ENCODE measurements at regions of chr16 and their contacts with region 1.

Region 1: GRCh38 chr16:75519881-75520280 is 16.0 kb downstream of the CHST5 start:
- DNase-seq: no peak
- H3K4me3 Mint-ChIP-seq: no peak overlapping the region
- H3K27ac Mint-ChIP-seq: no peak overlapping the region
- H3K4me1 Mint-ChIP-seq: peaks cover 10% of the 10 kb centered on the region
- H3K27me3 Mint-ChIP-seq: no peaks in the 10 kb centered on the region

Region 2: GRCh38 chr16:75471723-75472633 is 47.9 kb before region 1 on chr16:
- CTCF ChIA-PET with region 1: interaction called, 36 read pairs
- POLR2A ChIA-PET with region 1: no interaction called
- intact Hi-C with region 1: no loop called
- DNase-seq: peak; percentile 54
- H3K4me3 Mint-ChIP-seq: no peak overlapping the region
- H3K27ac Mint-ChIP-seq: no peak overlapping the region
- H3K4me1 Mint-ChIP-seq: no peaks in the 10 kb centered on the region
- H3K27me3 Mint-ChIP-seq: no peaks in the 10 kb centered on the region

Region 3: DNA sequence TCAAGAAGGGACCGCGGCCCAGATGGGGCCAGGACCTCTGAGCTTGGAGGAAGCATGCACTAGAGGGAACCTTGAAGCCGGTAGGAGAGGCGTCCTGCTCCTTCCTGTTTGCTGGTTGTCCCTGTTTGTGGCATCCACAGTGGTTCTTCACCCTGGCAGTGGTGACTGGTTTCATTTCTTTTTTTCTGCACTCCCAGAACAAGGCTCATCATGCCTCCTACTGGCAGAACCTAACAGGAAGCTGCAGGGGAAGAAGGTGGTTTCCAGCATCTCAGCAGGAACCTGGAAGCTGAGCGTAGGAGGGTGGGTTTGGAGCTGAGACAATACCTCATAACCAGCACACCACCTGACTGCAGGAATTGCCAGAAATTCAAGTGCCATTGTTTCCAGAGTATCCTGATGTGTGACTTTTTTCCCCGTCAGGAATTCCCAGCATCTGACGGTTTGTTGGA is 30.4 kb after region 1 on chr16:
- CTCF ChIA-PET with region 1: interaction called, 21 read pairs
- POLR2A ChIA-PET with region 1: interaction called, 8 read pairs
- intact Hi-C with region 1: no loop called
- DNase-seq: peak; percentile 64
- H3K4me3 Mint-ChIP-seq: no peak overlapping the region
- H3K27ac Mint-ChIP-seq: no peak overlapping the region
- H3K4me1 Mint-ChIP-seq: peaks cover 2% of the 10 kb centered on the region
- H3K27me3 Mint-ChIP-seq: no peaks in the 10 kb centered on the region

Region 4: GRCh38 chr16:75555707-75556430 is 36.0 kb after region 1 on chr16 and contains the start of gene TMEM231:
- CTCF ChIA-PET with region 1: interaction called, 21 read pairs
- POLR2A ChIA-PET with region 1: interaction called, 8 read pairs
- intact Hi-C with region 1: loop called (anchors 1 kb)
- DNase-seq: peak; percentile 98
- H3K4me3 Mint-ChIP-seq: peak within 1 kb of the TSS; percentile 88
- H3K27ac Mint-ChIP-seq: peak within 1 kb of the TSS; percentile 85
- H3K4me1 Mint-ChIP-seq: peaks cover 3% of the 10 kb centered on the region
- H3K27me3 Mint-ChIP-seq: peaks cover 4% of the 10 kb centered on the region
- total RNA-seq, gene TMEM231: 4.6 to 5.3 TPM

Region 5: GRCh38 chr16:75566040-75566810 is 46.3 kb after region 1 on chr16 and contains the start of gene GABARAPL2:
- CTCF ChIA-PET with region 1: interaction called, 19 read pairs
- POLR2A ChIA-PET with region 1: no interaction called
- intact Hi-C with region 1: loop called (anchors 2 kb)
- DNase-seq: peak; percentile 92
- H3K4me3 Mint-ChIP-seq: peak within 1 kb of the TSS; percentile 94
- H3K27ac Mint-ChIP-seq: peak within 1 kb of the TSS; percentile 85
- H3K4me1 Mint-ChIP-seq: peaks cover 40% of the 10 kb centered on the region
- H3K27me3 Mint-ChIP-seq: peaks cover 7% of the 10 kb centered on the region
- total RNA-seq, gene GABARAPL2: 71.5 to 76.1 TPM

Region 6: DNA sequence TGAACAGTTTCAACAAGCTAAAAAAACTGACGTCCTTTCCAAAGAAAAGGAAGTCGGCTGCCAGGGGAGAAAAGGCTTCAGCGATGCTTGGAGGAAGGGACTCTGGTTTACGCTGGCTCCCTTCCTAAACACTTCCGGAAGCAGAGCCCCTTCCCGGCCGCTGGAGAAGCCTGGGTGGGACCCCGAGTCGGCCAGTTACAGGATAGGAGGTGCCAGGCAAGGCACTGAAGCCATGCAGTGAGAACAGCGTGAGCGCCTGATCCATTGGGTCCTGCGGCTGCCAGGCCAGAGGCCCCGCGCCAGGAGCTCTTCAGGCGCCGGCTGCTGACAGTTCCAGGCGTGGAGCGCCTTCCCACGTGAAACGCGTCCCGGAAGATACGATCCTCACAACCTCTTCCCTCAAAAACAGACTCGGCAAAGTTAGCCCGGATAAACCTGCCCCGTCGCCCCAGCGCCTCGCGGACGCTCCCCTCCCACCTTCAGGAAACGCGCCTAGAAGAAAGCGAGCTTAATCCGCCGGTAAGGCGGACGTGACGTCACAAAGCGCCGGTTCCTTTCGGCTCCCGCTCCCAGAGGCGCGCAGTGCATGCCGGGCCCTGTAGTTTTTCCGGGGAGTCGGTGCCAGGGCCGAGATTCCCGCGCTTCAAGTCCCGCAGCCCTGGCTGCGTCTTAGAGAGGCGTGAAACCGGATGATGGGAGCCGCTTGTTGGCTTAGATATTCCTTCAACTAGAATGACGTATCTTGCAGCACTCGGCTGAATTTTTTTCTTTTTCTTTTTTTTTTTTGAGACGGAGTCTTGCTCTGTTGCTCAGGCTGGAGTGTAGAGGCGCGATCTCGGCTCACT is 103.1 kb after region 1 on chr16 and contains the start of gene ADAT1:
- CTCF ChIA-PET with region 1: interaction called, 15 read pairs
- POLR2A ChIA-PET with region 1: no interaction called
- intact Hi-C with region 1: loop called (anchors 1 kb)
- DNase-seq: peak; percentile 99
- H3K4me3 Mint-ChIP-seq: peak within 1 kb of the TSS; percentile 96
- H3K27ac Mint-ChIP-seq: peak within 1 kb of the TSS; percentile 97
- H3K4me1 Mint-ChIP-seq: peaks cover 52% of the 10 kb centered on the region
- H3K27me3 Mint-ChIP-seq: no peaks in the 10 kb centered on the region
- total RNA-seq, gene ADAT1: 39.9 to 40.2 TPM